Aorta (tissue), 5 donors: ENCODE measurements at regions of chr6 and their contacts with region 1.

Region 1: GRCh38 chr6:81396916-81397315 is 355.6 kb downstream of the TENT5A start:
- DNase-seq: no peak
- ATAC-seq: no peak
- H3K4me3 ChIP-seq: no peak overlapping the region
- H3K27ac ChIP-seq: no peak overlapping the region
- H3K4me1 ChIP-seq: no peaks in the 10 kb centered on the region
- H3K27me3 ChIP-seq: no peaks in the 10 kb centered on the region

Region 2: GRCh38 chr6:79525272-79526100 is 1871.4 kb before region 1 on chr6:
- intact Hi-C with region 1: loop called in 1 of 2 experiments (anchors 5 kb)
- DNase-seq: no peak
- ATAC-seq: no peak
- H3K4me3 ChIP-seq: no peak overlapping the region
- H3K27ac ChIP-seq: no peak overlapping the region
- H3K4me1 ChIP-seq: no peaks in the 10 kb centered on the region
- H3K27me3 ChIP-seq: no peaks in the 10 kb centered on the region